ENCODE measurements at regions of chr3 and their contacts with region 1.

Region 1: GRCh38 chr3:150469031-150469942 is 61.2 kb downstream of the TSC22D2 start:
- DNase-seq: peak; percentile 96
- H3K4me3 Mint-ChIP-seq: peak overlapping the region; percentile 70
- H3K27ac Mint-ChIP-seq: peak overlapping the region; percentile 93
- H3K4me1 Mint-ChIP-seq: peaks cover 28% of the 10 kb centered on the region
- H3K27me3 Mint-ChIP-seq: no peaks in the 10 kb centered on the region
- CTCF ChIP-seq: no peak

Region 2: GRCh38 chr3:150329408-150329807 is 139.9 kb before region 1 on chr3:
- CTCF ChIA-PET with region 1: no interaction called
- POLR2A ChIA-PET with region 1: no interaction called
- intact Hi-C with region 1: no loop called
- DNase-seq: no peak
- H3K4me3 Mint-ChIP-seq: no peak overlapping the region
- H3K27ac Mint-ChIP-seq: no peak overlapping the region
- H3K4me1 Mint-ChIP-seq: no peaks in the 10 kb centered on the region
- H3K27me3 Mint-ChIP-seq: no peaks in the 10 kb centered on the region
- CTCF ChIP-seq: no peak

Region 3: GRCh38 chr3:150443331-150443741 is 26.0 kb before region 1 on chr3:
- CTCF ChIA-PET with region 1: interaction called, 3 read pairs
- POLR2A ChIA-PET with region 1: interaction called, 19 read pairs
- intact Hi-C with region 1: no loop called
- DNase-seq: no peak
- H3K4me3 Mint-ChIP-seq: no peak overlapping the region
- H3K27ac Mint-ChIP-seq: no peak overlapping the region
- H3K4me1 Mint-ChIP-seq: peaks cover 51% of the 10 kb centered on the region
- H3K27me3 Mint-ChIP-seq: no peaks in the 10 kb centered on the region
- CTCF ChIP-seq: no peak

Region 4: GRCh38 chr3:150449169-150449721 is 20.0 kb before region 1 on chr3:
- CTCF ChIA-PET with region 1: interaction called, 7 read pairs
- POLR2A ChIA-PET with region 1: interaction called, 42 read pairs
- intact Hi-C with region 1: no loop called
- DNase-seq: peak; percentile 56
- H3K4me3 Mint-ChIP-seq: peak overlapping the region; percentile 43
- H3K27ac Mint-ChIP-seq: peak overlapping the region; percentile 44
- H3K4me1 Mint-ChIP-seq: peaks cover 34% of the 10 kb centered on the region
- H3K27me3 Mint-ChIP-seq: no peaks in the 10 kb centered on the region
- CTCF ChIP-seq: no peak